ENCODE measurements at regions of chr5 and their contacts with region 1.

Region 1: GRCh38 chr5:147188200-147189108 is 46.4 kb upstream of the STK32A start:
- DNase-seq: peak; percentile 77
- H3K27ac ChIP-seq: no peak overlapping the region
- CTCF ChIP-seq: peak; percentile 90

Region 2: GRCh38 chr5:146533260-146533857 is 655.1 kb before region 1 on chr5:
- CTCF ChIA-PET with region 1: interaction called, 32 read pairs
- POLR2A ChIA-PET with region 1: no interaction called
- DNase-seq: peak; percentile 68
- H3K27ac ChIP-seq: no peak overlapping the region
- CTCF ChIP-seq: peak; percentile 95

Region 3: DNA sequence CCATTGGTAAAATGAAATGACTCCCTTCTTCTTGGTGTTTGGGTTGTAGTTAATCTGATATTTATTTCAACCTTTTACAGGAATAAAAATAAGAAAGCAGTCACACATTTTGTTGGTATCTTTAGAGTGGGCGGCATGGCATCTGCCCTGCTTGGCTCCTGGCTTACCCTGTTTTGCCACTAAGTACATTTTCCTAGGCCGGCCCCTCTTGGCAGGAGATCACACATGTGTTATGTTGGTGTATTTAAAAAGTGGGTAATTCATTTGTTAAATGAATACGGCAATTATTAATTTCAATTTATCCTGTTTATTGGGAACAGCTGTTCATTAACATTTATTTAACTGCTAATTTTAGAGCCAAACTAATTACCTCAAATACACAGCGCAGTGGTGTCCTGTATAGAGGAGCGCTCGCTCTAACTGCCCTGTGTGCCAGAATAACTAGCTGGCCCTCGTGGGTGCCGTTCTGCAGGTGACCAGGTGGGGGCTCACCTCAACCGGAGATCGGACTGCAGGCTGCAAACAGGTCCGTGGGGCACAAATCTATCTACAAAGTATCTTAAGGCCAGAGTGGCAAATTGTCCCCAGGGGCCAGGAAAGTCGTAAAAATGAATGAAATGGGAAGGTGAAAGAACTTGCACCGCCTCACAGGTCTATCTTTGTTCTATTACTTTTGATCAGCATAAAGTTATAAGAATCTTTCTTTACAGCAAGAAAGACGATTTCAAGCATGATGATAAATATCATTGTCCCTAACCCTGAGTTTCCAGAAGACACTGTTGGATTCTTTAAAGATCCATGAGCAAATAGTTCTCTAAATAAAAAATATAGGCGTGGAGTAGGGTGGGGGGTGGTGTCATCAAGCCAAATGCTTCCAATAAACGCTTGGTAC is 646.2 kb before region 1 on chr5:
- CTCF ChIA-PET with region 1: interaction called, 17 read pairs
- POLR2A ChIA-PET with region 1: no interaction called
- DNase-seq: peak; percentile 82
- H3K27ac ChIP-seq: no peak overlapping the region
- CTCF ChIP-seq: peak; percentile 96

Region 4: DNA sequence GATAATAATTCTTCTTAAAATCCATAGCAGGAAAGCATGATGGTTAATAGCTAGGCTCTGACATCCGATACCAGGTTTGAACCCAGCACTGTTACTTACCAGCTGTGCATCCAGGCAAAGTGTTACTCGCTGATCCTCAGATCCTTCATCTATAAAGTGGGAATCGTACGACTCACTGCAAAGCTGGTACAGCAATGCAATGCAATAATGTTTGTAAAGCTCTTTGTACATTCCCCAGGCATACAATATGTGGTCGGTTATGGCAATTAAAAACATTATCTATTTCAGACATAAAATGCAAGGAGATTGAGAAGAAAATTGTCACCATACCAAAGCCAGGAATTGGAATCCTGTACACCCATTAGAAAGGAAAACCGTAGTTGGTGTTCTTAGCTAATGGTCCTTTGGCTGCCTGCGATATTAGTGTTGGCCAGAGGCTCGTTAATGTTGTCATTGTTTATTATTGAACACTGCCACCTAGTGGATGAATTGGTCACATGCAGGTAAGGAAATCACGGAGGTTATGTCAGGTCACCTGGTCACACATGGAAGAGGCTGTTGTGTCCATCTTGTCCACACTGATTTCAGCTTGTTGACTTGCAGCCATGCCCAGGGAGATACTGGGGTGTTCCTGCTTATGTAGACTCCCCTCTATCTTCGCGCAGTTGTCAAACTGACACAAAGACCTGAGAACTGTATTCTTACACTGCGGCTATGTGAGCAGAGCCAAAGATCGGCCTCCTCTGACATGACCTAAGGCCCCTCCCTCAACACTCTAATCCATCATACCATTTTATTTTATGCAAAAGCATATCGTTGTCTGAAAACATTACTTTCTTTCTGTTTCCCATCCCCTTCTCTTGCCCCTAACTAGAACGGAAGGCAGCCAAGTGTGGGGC is 222.4 kb before region 1 on chr5:
- CTCF ChIA-PET with region 1: interaction called, 15 read pairs
- POLR2A ChIA-PET with region 1: no interaction called
- DNase-seq: peak; percentile 72
- H3K27ac ChIP-seq: no peak overlapping the region
- CTCF ChIP-seq: peak; percentile 91

Region 5: DNA sequence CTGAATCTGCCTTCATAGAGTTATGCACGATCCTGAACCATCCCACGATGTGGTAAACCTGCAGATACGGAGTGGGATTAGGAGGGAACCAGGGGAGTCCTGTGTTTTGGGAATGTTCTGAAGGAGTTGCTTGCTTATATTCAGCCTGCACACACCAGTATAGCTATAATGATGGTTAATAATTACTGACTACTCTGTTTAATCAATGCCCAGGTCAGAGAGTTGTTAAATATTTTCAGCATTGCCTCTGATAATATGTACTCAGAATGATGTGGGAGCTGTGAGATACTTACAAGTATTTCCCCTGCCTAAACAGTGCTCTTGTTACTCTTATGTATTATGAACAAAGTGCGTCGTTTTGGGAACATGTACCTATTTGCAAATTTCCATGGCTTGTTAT is 11.5 kb after region 1 on chr5:
- CTCF ChIA-PET with region 1: interaction called, 18 read pairs
- POLR2A ChIA-PET with region 1: no interaction called
- DNase-seq: no peak
- H3K27ac ChIP-seq: no peak overlapping the region
- CTCF ChIP-seq: no peak

Region 6: GRCh38 chr5:147369742-147370374 is 181.4 kb after region 1 on chr5:
- CTCF ChIA-PET with region 1: interaction called, 10 read pairs
- POLR2A ChIA-PET with region 1: no interaction called
- DNase-seq: peak; percentile 40
- H3K27ac ChIP-seq: no peak overlapping the region
- CTCF ChIP-seq: peak; percentile 94